Naive thymus-derived CD4-positive, alpha-beta T cell (primary cell): ENCODE measurements at regions of chr10 and their contacts with region 1.

Region 1: DNA sequence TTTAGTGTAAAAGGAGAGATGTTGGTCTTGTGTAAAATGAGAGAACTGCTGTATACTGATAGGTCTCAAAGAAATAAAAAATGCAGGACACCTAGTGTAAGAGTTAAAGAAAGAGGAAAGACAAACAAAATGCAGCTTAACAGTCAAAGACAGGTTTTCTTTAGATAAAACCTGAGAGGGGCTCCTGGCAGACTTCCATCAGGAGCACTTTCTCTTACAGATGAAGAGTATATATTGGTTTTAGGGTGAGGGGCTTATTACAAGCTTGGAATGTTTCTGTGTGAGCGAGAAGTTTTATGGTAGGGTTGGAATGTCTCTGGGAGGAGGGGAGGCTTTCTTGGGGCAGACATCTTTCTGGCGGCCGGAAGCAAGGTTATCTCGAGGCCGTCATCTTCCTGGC is 16.2 kb downstream of the ACBD7 start:
- DNase-seq: no peak
- ATAC-seq: no peak
- H3K4me3 ChIP-seq: no peak overlapping the region
- H3K4me3 Mint-ChIP-seq: peak overlapping the region in 1 of 10 donors; percentile 10
- H3K27ac ChIP-seq: no peak overlapping the region
- H3K27ac Mint-ChIP-seq: no peak overlapping the region
- H3K4me1 ChIP-seq: no peaks in the 10 kb centered on the region
- H3K4me1 Mint-ChIP-seq: no peaks in the 10 kb centered on the region
- H3K27me3 ChIP-seq: no peaks in the 10 kb centered on the region
- H3K27me3 Mint-ChIP-seq: peaks cover 0 to 9% (median 3%) of the 10 kb centered on the region in 5 donors

Region 2: DNA sequence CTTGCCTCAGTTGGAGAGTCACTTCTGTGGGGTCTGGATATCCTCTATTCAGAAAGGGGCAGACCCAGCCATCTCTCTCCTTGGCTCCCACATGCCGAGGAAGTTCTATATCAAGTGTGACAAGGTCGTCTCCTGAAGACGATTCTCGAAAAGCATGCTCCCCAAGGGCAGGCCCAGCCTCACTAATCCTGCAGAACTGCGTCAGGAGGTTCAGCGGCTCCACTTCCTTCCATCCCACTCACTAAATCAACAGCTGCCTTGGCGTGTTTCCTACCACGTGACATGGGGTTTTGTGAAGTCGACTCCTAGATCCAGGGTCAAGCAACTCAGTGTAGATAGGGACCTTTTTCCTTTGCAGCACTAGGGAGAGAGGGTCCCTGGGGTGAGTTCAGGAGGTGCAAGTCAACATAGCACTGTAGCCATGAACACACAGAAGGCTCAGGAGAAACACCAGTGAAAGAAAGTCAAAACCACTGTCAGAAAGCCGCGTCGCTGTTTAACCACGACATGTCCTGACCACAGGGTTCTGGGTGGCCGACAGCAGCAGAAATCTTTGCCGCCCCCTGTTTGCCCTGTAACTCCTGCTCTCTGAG is 1329.2 kb before region 1 on chr10:
- CTCF ChIA-PET with region 1: no interaction called
- POLR2A ChIA-PET with region 1: interaction called, 12 read pairs
- intact Hi-C with region 1: no loop called
- DNase-seq: no peak
- ATAC-seq: no peak
- H3K4me3 ChIP-seq: no peak overlapping the region
- H3K4me3 Mint-ChIP-seq: peak overlapping the region in 2 of 10 donors; percentile 21 to 36
- H3K27ac ChIP-seq: no peak overlapping the region
- H3K27ac Mint-ChIP-seq: no peak overlapping the region
- H3K4me1 ChIP-seq: no peaks in the 10 kb centered on the region
- H3K4me1 Mint-ChIP-seq: peaks cover 0 to 11% (median 6%) of the 10 kb centered on the region in 7 donors
- H3K27me3 ChIP-seq: no peaks in the 10 kb centered on the region
- H3K27me3 Mint-ChIP-seq: peaks cover 14 to 32% (median 22%) of the 10 kb centered on the region in 5 donors